Esophagus muscularis mucosa (tissue), 4 donors: ENCODE measurements at regions of chr7 and their contacts with region 1.

Region 1: GRCh38 chr7:1225441-1226185 is 7.1 kb upstream of the UNCX start:
- DNase-seq: no peak
- H3K4me3 ChIP-seq: no peak overlapping the region
- H3K27ac ChIP-seq: no peak overlapping the region
- H3K4me1 ChIP-seq: peaks cover 9 to 35% (median 31%) of the 10 kb centered on the region in 4 donors
- H3K27me3 ChIP-seq: peaks cover 11 to 100% (median 79%) of the 10 kb centered on the region in 4 donors
- CTCF ChIP-seq: peak; percentile 64 to 84 (median 76)
- EP300 ChIP-seq: no peak
- POLR2A ChIP-seq: no peak

Region 2: DNA sequence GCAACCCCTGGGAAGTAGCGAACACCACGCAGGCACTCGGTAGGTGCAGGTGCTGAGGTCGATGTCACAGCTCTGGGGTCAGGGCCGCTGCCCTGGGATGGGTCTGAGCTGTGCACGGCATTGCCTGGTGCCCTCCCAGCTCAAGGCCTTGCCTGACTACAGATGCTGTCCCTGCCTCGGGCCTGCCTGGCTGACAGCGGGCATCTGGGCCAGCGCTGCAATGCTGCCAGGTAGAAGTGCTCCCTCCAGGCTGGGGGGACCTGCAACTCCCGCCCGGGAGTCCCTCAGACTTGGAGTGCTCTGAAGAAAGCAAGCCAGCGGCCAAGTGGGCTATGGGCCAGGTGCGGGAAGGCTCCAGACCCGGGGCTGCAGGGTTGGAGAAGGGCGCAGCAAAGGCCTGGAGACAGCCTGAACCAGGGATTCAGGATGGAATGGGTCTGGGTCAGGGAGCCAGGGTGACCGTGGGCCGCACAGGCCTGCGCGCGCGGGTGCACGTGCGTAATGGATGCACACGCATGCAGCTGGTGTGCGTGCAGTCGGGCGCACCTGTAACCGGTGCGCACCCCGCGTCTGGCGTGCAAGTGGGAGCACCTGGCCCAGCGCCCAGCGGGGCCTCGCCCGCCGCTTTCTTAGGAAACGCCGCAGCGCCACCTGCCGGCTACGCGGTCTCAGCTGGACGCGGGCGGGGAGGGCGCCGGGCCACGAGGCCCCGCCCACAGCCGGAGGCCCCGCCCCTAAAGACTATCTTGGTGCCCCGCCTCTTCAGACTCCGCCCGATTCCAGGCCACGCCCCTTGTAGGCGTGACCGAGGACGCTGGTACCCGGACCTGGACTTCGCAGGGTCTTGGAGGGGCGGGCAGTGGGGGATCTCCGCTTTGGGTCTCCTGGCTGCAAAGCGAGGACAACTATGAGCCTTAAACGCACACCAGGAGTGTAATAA is 187.0 kb after region 1 on chr7:
- intact Hi-C with region 1: loop called (anchors 10 kb)
- DNase-seq: no peak
- H3K4me3 ChIP-seq: peak overlapping the region in 2 of 4 donors; percentile 12 to 30
- H3K27ac ChIP-seq: no peak overlapping the region
- H3K4me1 ChIP-seq: peaks cover 7 to 15% (median 13%) of the 10 kb centered on the region in 4 donors
- H3K27me3 ChIP-seq: peaks cover 0 to 98% (median 23%) of the 10 kb centered on the region in 4 donors
- CTCF ChIP-seq: peak; percentile 74 to 84 (median 78)
- EP300 ChIP-seq: no peak
- POLR2A ChIP-seq: no peak

Region 3: DNA sequence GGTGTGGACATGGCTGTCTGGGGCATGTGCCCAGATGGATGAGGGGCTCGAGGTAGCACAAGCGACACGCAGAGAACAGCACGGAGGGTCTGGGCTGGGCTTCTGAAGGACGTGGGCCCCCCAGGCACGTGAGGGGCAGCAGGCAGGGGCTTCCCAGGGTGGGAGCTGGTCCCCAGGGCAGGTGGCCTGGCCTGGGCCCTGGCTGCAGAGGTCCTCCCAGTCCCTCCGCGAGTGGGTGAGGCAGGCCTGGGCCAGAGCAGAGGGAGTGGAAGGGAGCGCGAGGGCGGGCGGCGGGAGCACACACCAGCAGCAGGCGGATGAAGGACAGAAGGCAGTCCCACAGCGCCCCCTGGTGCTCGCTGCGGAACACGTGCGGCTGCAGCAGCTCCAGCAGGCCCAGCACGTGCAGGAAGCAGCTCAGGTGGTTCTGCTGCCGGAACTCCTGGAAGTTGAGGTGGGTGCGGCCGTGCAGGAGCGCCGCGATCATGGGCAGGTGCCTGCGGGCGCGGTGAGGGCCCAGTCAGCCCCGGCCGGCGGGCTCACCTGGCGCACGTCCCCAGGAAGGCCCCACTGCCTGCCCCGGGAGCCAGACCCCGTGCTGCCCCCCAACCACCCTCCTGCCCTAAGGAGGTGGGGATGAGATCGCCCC is 248.4 kb after region 1 on chr7:
- intact Hi-C with region 1: loop called (anchors 1 kb)
- DNase-seq: peak; percentile 96
- H3K4me3 ChIP-seq: no peak overlapping the region
- H3K27ac ChIP-seq: no peak overlapping the region
- H3K4me1 ChIP-seq: peaks cover 6 to 13% (median 12%) of the 10 kb centered on the region in 4 donors
- H3K27me3 ChIP-seq: no peaks in the 10 kb centered on the region
- CTCF ChIP-seq: peak; percentile 87 to 94 (median 87)
- EP300 ChIP-seq: no peak
- POLR2A ChIP-seq: no peak